AG04450 (cell line): ENCODE measurements at regions of chr6 and their contacts with region 1.

Region 1: DNA sequence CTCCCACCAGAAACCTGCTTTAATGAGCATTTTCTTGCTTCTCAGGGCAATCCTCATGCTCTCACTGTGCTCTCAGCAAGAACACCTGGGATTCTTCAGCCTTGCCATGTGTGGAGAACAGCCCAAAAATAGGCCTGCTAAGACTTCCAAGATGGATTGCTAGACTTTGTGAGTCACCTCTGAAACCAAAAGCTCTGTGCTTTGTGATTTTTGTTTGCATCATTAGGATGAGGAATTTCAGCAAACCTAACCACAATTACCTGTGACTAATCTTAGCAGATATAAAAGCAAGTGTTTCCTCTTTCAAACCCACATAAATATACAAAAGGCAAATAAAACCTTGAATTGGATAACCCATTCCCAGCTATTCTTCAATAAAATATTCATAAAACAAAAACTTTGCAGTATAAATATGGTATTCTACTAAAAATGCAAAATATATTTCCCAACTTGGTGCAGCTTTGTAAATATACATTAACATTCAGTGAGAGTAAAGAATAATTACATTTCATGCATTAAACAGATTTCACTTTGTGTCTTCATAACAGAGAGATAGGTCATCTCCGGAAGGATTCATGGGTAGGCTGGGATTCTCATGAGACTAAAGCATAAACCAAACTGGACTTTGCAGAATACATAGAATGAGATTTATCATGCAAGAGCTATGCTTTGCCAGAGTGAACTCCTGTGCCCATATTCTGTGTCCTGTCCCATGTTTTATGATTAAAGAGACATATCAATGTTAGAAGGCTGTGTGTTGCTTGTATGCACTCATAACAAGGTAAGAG is 33.5 kb downstream of the TPBG start:
- DNase-seq: peak; percentile 90
- H3K4me3 ChIP-seq: no peak overlapping the region
- H3K27ac ChIP-seq: peak overlapping the region; percentile 60
- H3K27me3 ChIP-seq: no peaks in the 10 kb centered on the region
- CTCF ChIP-seq: no peak

Region 2: GRCh38 chr6:82363351-82364086 is 33.6 kb before region 1 on chr6 and contains the start of gene TPBG:
- CTCF ChIA-PET with region 1: no interaction called
- POLR2A ChIA-PET with region 1: interaction called, 12 read pairs
- DNase-seq: peak; percentile 37
- H3K4me3 ChIP-seq: peak within 1 kb of the TSS; percentile 84
- H3K27ac ChIP-seq: peak within 1 kb of the TSS; percentile 99
- H3K27me3 ChIP-seq: no peaks in the 10 kb centered on the region
- CTCF ChIP-seq: peak; percentile 47
- polyA plus RNA-seq, gene TPBG: 88.7 and 93.2 TPM in 2 replicates

Region 3: GRCh38 chr6:82893889-82894652 is 496.9 kb after region 1 on chr6:
- CTCF ChIA-PET with region 1: no interaction called
- POLR2A ChIA-PET with region 1: no interaction called
- DNase-seq: no peak
- H3K4me3 ChIP-seq: no peak overlapping the region
- H3K27ac ChIP-seq: no peak overlapping the region
- H3K27me3 ChIP-seq: no peaks in the 10 kb centered on the region
- CTCF ChIP-seq: no peak